ENCODE measurements at regions of chr1 and their contacts with region 1.

Region 1: DNA sequence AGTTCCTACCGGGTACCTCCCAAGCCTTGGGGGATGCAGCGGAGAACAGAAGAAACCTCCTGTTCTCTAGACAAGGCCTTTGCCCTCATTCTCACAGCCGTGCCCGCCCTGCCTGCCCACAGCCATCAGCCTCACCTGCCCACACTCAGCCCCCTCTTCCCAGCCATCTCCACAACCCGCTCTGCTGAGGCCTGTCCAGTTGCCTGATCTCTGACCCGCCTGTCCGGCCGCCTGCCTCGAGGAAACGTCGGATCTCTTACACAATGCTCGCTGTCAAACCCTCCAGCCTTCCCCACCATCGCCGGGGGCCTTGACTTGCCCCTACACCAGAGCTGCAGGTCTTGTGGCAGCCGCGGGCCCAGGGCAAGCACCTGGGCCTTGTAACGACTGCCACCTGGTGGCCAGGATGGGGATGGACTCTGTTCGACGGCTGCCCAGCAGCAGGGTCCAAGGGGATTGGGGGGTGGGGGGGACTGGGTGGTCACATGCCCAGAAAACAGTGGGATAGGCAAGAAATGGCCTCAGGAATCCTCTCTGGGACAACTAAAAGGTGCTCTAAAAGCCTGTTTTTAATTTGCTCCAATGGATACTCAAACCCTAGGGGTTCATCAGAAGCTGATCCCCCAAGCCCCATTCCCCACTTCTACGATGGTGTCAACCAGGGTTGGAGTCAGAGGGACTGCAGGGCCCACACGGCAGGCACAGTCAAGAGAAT is 31.0 kb downstream of the SLC45A1 start:
- DNase-seq: no peak
- H3K4me3 ChIP-seq: no peak overlapping the region
- H3K27ac ChIP-seq: peak overlapping the region in 3 of 4 donors; percentile 16 to 76 (median 74)
- H3K4me1 ChIP-seq: peaks cover 0 to 55% (median 40%) of the 10 kb centered on the region in 4 donors
- H3K27me3 ChIP-seq: no peaks in the 10 kb centered on the region
- CTCF ChIP-seq: peak; percentile 78 to 94 (median 84)
- EP300 ChIP-seq: no peak
- POLR2A ChIP-seq: no peak

Region 2: DNA sequence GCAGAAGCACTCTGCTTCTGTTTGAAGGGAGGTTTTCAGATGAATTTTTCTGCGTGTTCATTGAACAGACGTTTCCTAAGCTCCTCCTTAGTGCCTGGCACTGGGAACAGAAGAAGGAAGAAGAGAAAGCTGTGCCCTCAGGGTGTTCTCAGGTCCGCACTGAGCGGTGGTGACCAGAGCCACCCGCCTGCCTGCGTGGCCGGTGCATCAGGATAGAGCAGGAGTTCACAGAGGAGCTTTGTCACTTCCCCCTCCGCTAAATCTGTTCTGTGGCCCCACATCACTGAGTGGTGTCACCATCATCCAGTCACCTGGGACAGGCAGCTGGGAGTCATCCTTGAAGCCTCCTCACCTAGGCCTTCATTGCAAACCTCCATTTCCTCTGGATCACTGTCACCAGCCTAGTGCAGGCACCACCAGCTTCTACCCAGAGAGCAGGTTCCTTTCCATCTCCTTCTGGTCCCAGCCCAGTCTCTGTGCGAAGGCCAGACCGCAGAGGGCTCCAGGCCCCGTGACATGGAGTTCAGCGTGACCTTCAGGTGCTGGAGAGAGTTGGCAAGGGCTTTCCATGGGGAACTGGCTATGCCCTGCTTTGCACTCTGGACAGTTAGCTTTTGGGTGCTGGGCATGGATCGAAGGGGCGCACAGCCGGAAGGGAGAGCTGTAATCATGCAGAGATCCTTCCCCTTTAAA is 365.7 kb before region 1 on chr1:
- intact Hi-C with region 1: loop called (anchors 1 kb)
- DNase-seq: no peak
- H3K4me3 ChIP-seq: no peak overlapping the region
- H3K27ac ChIP-seq: no peak overlapping the region
- H3K4me1 ChIP-seq: peaks cover 0 to 7% (median 1%) of the 10 kb centered on the region in 4 donors
- H3K27me3 ChIP-seq: no peaks in the 10 kb centered on the region
- CTCF ChIP-seq: no peak
- EP300 ChIP-seq: no peak
- POLR2A ChIP-seq: no peak